ENCODE measurements at regions of chr20 and their contacts with region 1.

Region 1: GRCh38 chr20:33169176-33169794 is 1.3 kb downstream of the BPIFA2 start:
- DNase-seq: no peak
- H3K4me3 ChIP-seq: no peak overlapping the region
- H3K27ac ChIP-seq: no peak overlapping the region
- H3K4me1 ChIP-seq: no peaks in the 10 kb centered on the region
- H3K27me3 ChIP-seq: peaks cover 0 to 6% (median 0%) of the 10 kb centered on the region in 3 donors
- CTCF ChIP-seq: peak in 1 of 4 experiments; percentile 12
- EP300 ChIP-seq: no peak
- POLR2A ChIP-seq: no peak

Region 2: DNA sequence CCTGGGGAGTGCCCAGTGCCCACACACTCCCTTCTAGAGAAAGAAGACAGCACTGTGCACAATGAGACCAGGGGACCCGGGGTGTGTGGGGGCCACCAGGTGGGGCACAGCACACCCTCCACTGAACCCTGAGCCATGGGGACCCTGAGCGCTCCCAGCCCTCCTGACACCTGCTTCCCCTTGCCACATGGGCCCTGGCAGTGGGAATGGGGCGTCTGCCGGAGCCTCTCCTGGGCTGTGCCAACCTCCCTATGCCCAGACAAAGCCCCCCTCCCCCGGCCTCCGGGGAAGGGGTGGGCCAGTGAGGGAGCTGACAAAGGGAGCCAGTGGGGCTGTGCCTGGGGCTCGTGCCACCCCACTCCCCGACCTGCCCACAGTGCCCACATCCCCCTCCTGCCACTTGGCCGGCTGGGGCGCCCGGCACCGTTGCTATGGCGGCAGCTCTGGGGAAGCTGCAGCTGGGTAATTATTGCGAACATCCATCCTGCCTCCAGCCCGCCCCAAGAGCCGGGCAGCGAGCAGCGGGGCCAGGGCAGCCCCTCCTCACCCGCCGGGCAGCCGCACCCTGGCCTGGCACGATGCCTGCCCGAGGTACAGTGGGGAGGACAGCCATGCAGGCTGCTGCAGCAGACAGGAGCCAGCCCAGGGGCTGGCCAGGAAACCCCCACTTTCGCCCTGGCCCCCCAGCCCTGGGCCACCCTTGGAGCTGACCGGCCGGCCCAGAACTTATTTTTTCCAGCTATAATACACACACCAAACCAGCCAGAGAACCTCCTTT is 542.2 kb before region 1 on chr20:
- intact Hi-C with region 1: no loop called
- DNase-seq: no peak
- H3K4me3 ChIP-seq: peak overlapping the region in 1 of 4 donors; percentile 22
- H3K27ac ChIP-seq: peak overlapping the region in 2 of 4 donors; percentile 21 to 45
- H3K4me1 ChIP-seq: peaks cover 0 to 14% (median 13%) of the 10 kb centered on the region in 4 donors
- H3K27me3 ChIP-seq: peaks cover 0 to 12% (median 0%) of the 10 kb centered on the region in 3 donors
- CTCF ChIP-seq: no peak
- EP300 ChIP-seq: no peak
- POLR2A ChIP-seq: no peak

Region 3: DNA sequence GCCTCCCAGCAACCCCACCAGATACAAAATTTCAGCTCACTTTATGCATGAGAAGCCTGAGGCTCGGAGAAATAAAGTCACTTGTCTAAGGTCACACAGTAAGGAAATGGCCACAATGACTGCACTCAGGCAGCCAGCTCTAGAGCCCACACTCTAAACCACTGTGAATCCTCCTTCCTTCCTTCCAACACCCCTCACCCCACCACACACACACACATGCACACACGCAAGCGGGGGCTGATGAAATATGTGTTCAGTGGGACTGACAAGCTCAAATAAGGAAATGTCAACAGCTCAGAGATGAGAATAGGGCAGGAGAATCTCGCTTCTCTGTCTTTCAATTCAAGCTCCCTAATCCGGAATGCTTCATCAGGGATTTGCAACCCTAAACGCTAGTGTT is 60.6 kb after region 1 on chr20:
- intact Hi-C with region 1: loop called (anchors 10 kb)
- DNase-seq: no peak
- H3K4me3 ChIP-seq: no peak overlapping the region
- H3K27ac ChIP-seq: no peak overlapping the region
- H3K4me1 ChIP-seq: no peaks in the 10 kb centered on the region
- H3K27me3 ChIP-seq: peaks cover 0 to 8% (median 0%) of the 10 kb centered on the region in 3 donors
- CTCF ChIP-seq: no peak
- EP300 ChIP-seq: no peak
- POLR2A ChIP-seq: no peak

Region 4: GRCh38 chr20:33373735-33374605 is 204.7 kb after region 1 on chr20:
- intact Hi-C with region 1: no loop called
- DNase-seq: no peak
- H3K4me3 ChIP-seq: no peak overlapping the region
- H3K27ac ChIP-seq: peak overlapping the region in 2 of 4 donors; percentile 15 to 55
- H3K4me1 ChIP-seq: peaks cover 0 to 7% (median 0%) of the 10 kb centered on the region in 4 donors
- H3K27me3 ChIP-seq: no peaks in the 10 kb centered on the region
- CTCF ChIP-seq: no peak
- EP300 ChIP-seq: no peak
- POLR2A ChIP-seq: no peak

Region 5: DNA sequence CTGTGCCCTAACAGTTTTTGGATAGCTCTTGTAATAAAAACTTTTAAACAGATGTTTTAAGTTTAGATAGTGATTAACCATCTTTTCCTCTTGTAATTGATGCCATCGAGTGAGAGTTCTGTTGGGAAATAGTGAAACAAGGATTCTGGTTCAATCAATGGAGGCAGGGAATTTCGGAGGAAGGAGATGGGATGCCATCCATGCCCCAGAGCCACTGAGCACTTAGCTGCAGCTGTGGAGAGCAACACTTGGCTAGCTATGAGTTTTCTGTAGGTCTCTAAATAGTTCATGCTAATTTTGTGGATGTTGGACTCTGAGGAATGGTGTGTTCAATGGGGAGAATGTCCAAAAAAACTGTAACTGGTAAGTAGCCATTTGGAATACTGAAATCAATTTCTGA is 337.3 kb after region 1 on chr20:
- intact Hi-C with region 1: no loop called
- DNase-seq: no peak
- H3K4me3 ChIP-seq: no peak overlapping the region
- H3K27ac ChIP-seq: no peak overlapping the region
- H3K4me1 ChIP-seq: peaks cover 0 to 25% (median 2%) of the 10 kb centered on the region in 4 donors
- H3K27me3 ChIP-seq: no peaks in the 10 kb centered on the region
- CTCF ChIP-seq: no peak
- EP300 ChIP-seq: no peak
- POLR2A ChIP-seq: no peak

Measured in sigmoid colon (tissue), 7 donors.